SK-MEL-5 (cell line): ENCODE measurements at regions of chr15 and their contacts with region 1.

Region 1: DNA sequence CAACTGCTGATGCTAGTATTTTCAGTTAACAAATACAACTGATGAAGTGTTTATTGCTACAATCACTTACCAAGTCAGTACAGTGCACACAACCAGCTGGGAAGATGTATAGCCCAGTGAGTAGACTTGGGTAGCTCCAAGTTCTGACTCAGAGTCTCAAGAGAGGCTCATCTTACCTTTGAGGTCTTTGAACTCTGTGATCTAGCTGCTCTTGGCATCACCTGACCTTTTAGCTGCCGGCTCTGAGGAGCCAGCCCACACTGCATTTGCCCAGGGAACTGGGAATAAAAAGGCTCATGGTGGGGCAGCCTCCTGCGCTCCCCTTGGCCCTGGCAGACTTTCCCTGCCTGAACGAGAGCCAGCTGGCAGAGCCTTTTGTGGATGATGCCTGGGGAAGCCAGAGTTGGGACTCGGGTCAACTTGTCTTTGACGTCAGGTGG is 82.6 kb downstream of the CEMIP start:
- DNase-seq: no peak

Region 2: DNA sequence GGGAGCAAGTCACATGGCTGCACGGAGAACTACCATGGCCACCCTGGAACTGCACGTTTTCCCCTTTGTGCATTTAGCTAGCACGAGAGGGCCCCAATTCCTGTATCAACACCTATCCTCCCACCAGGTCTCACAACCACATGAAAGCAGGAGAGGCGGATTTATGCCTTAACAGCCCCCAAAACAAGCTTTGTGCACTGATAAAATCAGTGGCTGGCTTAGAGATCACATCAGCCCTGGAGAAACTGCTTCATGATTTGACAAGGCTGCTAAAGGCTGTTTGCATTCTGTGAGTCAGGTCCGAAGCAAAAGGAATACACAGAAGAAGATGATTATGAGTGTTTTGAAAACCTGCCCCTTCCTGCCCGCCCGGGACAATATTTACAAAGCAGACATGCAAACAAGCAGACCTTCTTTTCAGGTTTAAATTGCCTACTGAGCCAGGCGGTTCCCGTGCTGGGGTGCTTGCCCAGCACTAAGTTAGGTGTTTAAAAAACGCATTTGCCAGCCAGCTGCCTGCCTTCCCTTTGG is 56.7 kb before region 1 on chr15:
- in situ Hi-C with region 1: loop called (anchors 10 kb)
- DNase-seq: no peak